ENCODE measurements at regions of chr20 and their contacts with region 1.

Region 1: DNA sequence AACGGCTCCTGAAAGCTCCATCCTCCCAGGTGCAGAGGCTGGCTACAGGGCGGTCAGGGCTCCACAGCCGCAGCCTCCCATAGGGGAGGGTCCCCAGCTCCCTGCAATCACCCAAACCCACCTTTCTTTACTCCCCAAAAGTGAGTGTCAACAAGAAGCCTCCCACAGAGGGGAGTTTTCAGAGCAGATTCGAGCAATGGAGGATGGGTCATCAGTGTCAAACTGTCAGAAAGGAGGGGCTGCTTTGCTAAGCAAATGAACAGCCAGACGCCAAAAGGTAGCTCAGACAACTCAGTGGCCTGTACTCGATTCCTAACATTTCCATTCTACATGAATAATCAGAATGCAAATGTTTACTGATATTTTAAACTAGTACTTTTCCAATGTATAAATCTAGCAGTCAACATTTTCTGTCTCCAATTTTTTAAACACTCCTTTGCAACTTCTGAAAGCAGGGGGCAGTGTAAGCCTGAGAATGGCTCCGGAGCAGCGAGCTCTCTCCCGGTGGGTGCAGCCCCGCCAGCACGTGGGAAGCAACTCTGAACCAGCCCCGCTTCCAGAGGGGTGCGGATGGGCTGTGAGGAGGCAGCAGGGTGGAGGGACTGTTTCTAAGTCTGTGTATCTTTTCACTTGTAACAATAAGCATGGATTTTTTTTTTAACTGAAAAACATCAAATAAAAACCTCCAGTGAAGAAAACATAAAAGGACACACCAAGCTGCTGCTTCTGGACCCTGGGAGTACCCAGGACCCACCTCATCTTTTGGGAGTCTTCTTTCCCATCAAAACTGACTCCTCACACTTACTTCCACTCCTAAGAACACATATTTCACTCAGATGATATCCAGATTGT is 54.9 kb downstream of the TAF4 start:
- DNase-seq: peak; percentile 45 to 70 (median 55)
- ATAC-seq: peak; percentile 69
- H3K4me3 ChIP-seq: no peak overlapping the region
- H3K4me1 ChIP-seq: no peaks in the 10 kb centered on the region
- CTCF ChIP-seq: no peak

Region 2: GRCh38 chr20:62143118-62143973 is 132.6 kb after region 1 on chr20 and contains the starts of genes PSMA7 and SS18L1:
- intact Hi-C with region 1: loop called in 1 of 2 experiments (anchors 10 kb)
- DNase-seq: peak; percentile 85 to 92 (median 92)
- ATAC-seq: peak; percentile 94
- H3K4me3 ChIP-seq: peak within 1 kb of the TSS; percentile 95
- H3K4me1 ChIP-seq: peaks cover 20% of the 10 kb centered on the region
- CTCF ChIP-seq: no peak
- total RNA-seq, gene PSMA7: 129 to 197 (median 194) TPM
- total RNA-seq, gene SS18L1: 13.2 to 16.0 (median 14.4) TPM

Measured in mucosa of descending colon (tissue), 3 donors.